ENCODE measurements at regions of chr1 and their contacts with region 1.

Region 1: DNA sequence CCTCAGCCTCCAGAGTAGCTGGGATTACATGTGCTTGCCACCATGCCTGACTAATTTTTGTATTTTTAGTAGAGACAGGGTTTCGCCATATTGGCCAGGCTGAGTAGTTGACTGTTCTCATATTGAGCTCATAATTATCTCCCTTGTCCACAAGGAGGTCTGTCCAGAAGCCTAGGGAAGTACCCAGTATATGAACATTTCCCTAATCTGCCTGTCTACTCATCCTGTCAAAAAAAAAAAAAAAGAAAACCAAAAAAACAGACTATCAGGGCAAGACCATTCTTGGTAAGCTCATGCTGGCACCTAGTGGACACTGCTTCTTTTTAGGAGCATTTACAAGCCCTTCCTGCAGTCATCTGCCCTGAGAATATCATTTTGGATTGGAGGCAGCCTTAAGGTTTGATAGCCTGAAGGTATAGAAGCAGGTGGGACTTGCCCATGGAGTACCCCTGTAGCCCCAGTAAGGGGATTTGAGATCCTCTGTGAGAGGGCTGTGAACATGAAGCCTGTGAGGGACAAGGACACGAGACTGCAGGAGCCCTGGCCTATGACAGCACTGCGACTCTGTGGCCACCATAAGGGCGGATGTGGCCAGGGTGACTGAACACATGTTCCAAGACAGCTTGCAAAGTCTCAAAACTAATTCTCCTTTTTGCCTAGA is 10.8 kb upstream of the DUSP12 start:
- DNase-seq: peak; percentile 74
- H3K4me3 ChIP-seq: no peak overlapping the region
- H3K27ac ChIP-seq: no peak overlapping the region
- H3K4me1 ChIP-seq: peaks cover 36% of the 10 kb centered on the region
- H3K27me3 ChIP-seq: no peaks in the 10 kb centered on the region
- CTCF ChIP-seq: peak; percentile 68 to 79

Region 2: DNA sequence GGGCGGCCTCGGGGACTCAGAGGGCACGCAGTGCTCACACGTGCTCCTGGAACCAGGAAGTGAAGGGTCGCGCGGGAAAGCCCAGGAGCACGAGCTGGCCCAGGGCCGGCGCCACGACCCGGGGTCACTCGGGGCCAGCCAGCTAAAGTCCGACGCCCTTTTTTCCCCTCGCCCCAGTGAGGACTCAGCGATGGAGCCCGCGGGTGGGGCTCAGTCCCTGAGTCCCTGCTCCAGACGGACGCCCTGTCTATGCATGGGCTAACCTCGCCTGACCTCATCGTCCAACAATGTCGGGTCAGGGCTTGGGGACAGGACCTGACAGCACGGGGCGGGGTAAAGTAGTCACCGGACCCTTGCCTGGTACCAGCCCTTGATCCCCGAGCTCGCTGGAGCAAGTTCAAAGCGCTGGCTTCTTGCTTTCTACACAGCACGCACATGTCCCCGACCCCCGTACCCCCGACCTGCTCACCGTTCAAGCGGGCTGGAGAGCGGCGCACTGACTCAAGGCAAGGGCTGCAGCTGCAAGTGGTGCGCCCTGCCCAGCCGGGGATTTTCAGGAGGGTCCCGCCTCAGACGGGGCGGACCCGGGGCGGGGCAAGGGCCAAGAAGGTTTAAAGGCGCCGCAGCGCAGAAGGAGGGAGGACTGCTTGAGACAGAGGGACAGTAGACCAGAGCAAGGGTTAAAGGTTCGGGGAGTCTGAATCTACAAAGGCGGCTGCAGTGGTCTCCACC is 1813.6 kb before region 1 on chr1 and contains the start of gene TAGLN2:
- CTCF ChIA-PET with region 1: interaction called, 17 read pairs
- dilution Hi-C with region 1: no loop called
- in situ Hi-C with region 1: no loop called
- intact Hi-C with region 1: no loop called
- DNase-seq: peak; percentile 93
- H3K4me3 ChIP-seq: peak within 1 kb of the TSS; percentile 62 to 93 (median 77)
- H3K27ac ChIP-seq: peak within 1 kb of the TSS; percentile 98
- H3K4me1 ChIP-seq: peaks cover 44% of the 10 kb centered on the region
- H3K27me3 ChIP-seq: no peaks in the 10 kb centered on the region
- CTCF ChIP-seq: no peak
- total RNA-seq, gene TAGLN2: 178 to 454 TPM

Region 3: GRCh38 chr1:161486806-161487741 is 251.7 kb before region 1 on chr1:
- CTCF ChIA-PET with region 1: interaction called, 4 read pairs
- dilution Hi-C with region 1: no loop called
- in situ Hi-C with region 1: no loop called
- intact Hi-C with region 1: loop called (anchors 1 kb)
- DNase-seq: peak; percentile 71
- H3K4me3 ChIP-seq: no peak overlapping the region
- H3K27ac ChIP-seq: no peak overlapping the region
- H3K4me1 ChIP-seq: peaks cover 13% of the 10 kb centered on the region
- H3K27me3 ChIP-seq: no peaks in the 10 kb centered on the region
- CTCF ChIP-seq: peak; percentile 47 to 76

Region 4: GRCh38 chr1:161631076-161631475 is 107.7 kb before region 1 on chr1 and contains the start of gene FCGR3B:
- CTCF ChIA-PET with region 1: no interaction called
- dilution Hi-C with region 1: no loop called
- in situ Hi-C with region 1: loop called in 1 of 2 experiments (anchors 10 kb)
- intact Hi-C with region 1: no loop called
- DNase-seq: no peak
- H3K4me3 ChIP-seq: no peak within 1 kb of the TSS
- H3K27ac ChIP-seq: no peak within 1 kb of the TSS
- H3K4me1 ChIP-seq: no peaks in the 10 kb centered on the region
- H3K27me3 ChIP-seq: no peaks in the 10 kb centered on the region
- CTCF ChIP-seq: no peak
- total RNA-seq, gene FCGR3B: not detected

Region 5: DNA sequence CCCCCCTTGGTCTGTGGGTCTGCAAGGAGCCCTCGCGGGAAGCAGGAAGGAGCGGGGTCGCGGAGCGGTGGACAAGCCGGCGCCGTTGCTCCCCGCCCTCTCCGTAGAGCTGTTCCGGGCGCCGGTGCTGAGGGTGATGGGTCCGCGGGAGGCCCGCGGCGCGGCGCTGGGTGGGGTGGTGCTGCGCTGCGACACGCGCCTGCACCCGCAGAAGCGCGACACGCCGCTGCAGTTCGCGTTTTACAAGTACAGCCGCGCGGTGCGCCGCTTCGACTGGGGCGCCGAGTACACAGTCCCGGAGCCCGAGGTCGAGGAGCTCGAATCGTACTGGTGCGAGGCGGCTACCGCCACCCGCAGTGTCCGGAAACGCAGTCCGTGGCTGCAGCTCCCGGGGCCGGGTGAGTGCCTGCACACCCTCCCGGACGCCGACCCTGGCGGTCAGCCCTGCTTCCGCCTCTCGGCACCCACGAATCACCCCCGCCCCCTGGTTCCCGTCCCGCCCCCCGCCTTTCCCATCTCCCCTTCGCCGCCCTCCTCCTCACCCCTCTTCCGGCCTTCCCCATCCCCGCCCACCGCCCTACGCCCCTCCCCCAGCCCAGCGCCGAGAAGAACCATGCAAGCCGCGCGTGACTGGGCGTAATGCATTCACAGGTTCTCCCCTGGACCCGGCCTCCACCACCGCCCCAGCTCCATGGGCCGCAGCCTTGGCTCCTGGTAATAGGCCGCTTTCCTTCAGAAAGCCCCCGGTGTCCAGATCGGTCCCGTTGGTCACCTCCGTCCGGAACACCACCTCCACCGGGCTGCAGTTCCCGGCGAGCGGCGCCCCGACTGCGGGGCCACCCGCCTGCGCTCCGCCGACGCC is 11.9 kb before region 1 on chr1:
- CTCF ChIA-PET with region 1: no interaction called
- dilution Hi-C with region 1: no loop called
- in situ Hi-C with region 1: no loop called
- intact Hi-C with region 1: loop called (anchors 1 kb)
- DNase-seq: peak; percentile 80
- H3K4me3 ChIP-seq: peak overlapping the region; percentile 73 to 78 (median 74)
- H3K27ac ChIP-seq: peak overlapping the region; percentile 77
- H3K4me1 ChIP-seq: peaks cover 34% of the 10 kb centered on the region
- H3K27me3 ChIP-seq: no peaks in the 10 kb centered on the region
- CTCF ChIP-seq: no peak

Region 6: GRCh38 chr1:161810780-161811179 is 72.0 kb after region 1 on chr1:
- CTCF ChIA-PET with region 1: no interaction called
- dilution Hi-C with region 1: no loop called
- in situ Hi-C with region 1: no loop called
- intact Hi-C with region 1: no loop called
- DNase-seq: no peak
- H3K4me3 ChIP-seq: no peak overlapping the region
- H3K27ac ChIP-seq: no peak overlapping the region
- H3K4me1 ChIP-seq: no peaks in the 10 kb centered on the region
- H3K27me3 ChIP-seq: no peaks in the 10 kb centered on the region
- CTCF ChIP-seq: no peak